ENCODE measurements at regions of chr7 and their contacts with region 1.

Region 1: DNA sequence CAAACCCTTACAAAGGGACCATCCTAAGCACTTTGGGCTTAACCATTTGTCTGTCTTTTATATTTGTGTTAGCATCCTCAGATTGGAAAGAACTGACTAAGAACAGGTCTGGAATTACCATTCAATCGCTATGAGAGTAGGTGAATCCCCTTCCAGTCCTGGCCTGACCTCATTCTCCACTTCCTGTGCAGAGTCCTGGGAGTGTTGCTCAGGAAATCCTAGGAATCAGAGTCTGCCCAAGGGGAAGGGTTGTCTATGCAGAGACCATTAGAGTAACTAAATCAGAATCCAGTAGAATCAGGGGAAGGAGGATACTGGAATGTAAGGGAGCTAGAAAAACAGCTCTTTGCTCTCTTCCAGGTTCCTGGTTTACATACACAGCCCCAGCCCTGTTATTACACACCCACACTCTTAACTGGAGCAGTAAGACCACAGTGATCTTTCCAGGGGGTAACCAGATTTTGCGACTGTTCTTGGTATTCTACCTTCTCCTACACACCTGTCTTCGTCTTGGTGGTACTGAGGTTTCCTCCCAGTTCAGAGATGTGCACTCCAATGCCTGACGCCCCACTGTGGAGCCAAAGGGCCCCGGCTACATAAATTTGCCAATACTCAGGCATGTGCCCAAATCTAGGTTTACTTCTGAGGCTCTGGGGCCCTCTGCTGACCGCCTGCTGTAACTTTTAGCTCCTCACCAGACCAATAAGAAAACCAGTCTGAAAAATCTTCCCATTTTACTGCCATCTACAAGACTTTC is 103.7 kb downstream of the RNF216 start:
- DNase-seq: peak; percentile 84
- H3K4me3 ChIP-seq: peak overlapping the region in 1 of 3 experiments; percentile 17
- H3K27ac ChIP-seq: peak overlapping the region; percentile 75
- H3K4me1 ChIP-seq: peaks cover 17% of the 10 kb centered on the region
- H3K27me3 ChIP-seq: no peaks in the 10 kb centered on the region
- CTCF ChIP-seq: peak; percentile 77 to 81
- POLR2A ChIP-seq: no peak

Region 2: GRCh38 chr7:5243261-5243660 is 434.5 kb before region 1 on chr7:
- CTCF ChIA-PET with region 1: interaction called, 12 read pairs
- POLR2A ChIA-PET with region 1: interaction called, 3 read pairs
- dilution Hi-C with region 1: no loop called
- intact Hi-C with region 1: loop called (anchors 5 kb)
- DNase-seq: no peak
- H3K4me3 ChIP-seq: no peak overlapping the region
- H3K27ac ChIP-seq: no peak overlapping the region
- H3K4me1 ChIP-seq: peaks cover 2% of the 10 kb centered on the region
- H3K27me3 ChIP-seq: no peaks in the 10 kb centered on the region
- CTCF ChIP-seq: no peak
- POLR2A ChIP-seq: no peak

Region 3: DNA sequence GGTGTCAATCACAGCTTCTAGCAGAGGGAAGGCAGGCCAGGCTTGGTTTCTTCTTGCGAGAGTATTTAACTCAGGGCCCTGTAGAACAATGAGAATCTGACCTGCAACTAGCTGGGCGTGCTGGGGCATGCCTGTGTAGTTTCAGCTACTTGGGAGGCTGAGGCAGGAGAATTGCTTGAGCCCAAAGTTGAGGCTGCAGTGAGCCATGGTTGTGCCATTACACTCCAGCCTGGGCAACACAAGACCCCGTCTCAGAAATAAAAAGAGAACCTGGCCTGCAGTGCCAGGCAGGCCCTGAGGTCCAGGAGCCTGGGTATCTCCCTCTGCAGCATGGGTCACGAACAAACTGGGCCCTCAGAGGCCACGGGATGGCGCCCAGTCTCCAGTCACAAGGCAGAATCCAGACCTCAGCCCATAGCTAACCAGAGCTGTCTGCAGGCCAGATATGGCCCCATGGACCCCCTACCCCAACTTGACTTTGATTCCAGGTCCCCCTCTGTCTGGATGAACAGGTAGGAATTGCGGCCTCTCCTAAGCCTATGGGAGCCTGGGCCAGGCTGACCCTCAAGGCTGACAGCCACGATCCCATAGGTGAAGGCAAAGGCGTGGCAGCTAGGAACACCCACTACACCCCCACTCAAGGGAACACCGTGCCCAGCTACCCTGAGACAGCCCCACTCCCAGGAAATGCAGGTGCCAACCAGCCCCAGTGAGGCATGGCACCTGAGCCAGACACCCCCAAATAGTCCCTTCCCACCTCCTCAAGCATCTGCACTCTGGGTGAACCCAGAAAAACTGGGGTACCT is 151.4 kb before region 1 on chr7:
- CTCF ChIA-PET with region 1: interaction called, 31 read pairs
- POLR2A ChIA-PET with region 1: interaction called, 4 read pairs
- dilution Hi-C with region 1: no loop called
- intact Hi-C with region 1: no loop called
- DNase-seq: peak; percentile 34
- H3K4me3 ChIP-seq: no peak overlapping the region
- H3K27ac ChIP-seq: no peak overlapping the region
- H3K4me1 ChIP-seq: peaks cover 3% of the 10 kb centered on the region
- H3K27me3 ChIP-seq: no peaks in the 10 kb centered on the region
- CTCF ChIP-seq: no peak
- POLR2A ChIP-seq: peak; percentile 69

Region 4: DNA sequence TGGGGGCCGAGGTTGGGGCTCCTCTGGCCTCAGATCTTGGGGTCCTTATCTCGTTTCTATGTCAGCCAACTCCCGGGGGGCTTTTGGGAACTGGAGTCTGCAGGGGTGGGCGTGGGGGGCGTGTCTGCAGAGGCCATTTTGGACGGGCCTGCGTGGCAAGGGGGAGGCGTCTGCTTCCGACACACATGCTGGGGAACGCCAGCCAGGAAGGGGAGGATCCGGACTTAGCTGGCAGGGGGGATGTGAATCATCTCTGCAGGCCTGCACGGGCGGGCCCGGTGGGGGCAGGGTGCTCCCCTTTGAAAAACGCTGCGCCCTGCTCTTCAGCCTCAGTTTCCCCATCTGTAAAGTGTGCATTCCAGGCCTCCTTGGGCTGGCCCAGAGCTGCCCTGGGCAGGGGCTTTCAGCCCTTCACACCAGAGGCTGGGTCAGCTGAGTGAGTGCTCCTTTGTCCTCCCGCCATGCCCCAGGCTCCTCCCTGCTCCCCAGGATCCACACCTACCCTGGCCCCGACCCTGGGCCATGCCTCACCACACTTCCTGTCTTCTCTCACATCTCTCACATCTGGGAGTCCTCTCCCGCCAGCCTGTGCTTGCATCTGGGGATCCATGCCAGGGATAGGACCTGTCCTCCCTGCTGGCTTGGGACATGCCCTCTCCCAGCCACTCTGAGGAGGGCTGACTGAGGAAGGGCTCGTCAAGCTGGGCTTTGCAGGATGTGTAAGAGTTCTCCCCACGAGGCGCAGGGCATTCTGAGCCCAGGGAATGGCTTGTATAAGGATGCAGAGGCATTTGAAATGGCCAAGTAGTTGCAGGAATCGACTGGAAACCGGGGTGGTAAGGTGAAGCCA is 81.4 kb before region 1 on chr7:
- CTCF ChIA-PET with region 1: interaction called, 14 read pairs
- POLR2A ChIA-PET with region 1: interaction called, 3 read pairs
- dilution Hi-C with region 1: no loop called
- intact Hi-C with region 1: no loop called
- DNase-seq: peak; percentile 88
- H3K4me3 ChIP-seq: peak overlapping the region; percentile 20 to 93 (median 85)
- H3K27ac ChIP-seq: peak overlapping the region; percentile 72
- H3K4me1 ChIP-seq: peaks cover 41% of the 10 kb centered on the region
- H3K27me3 ChIP-seq: no peaks in the 10 kb centered on the region
- CTCF ChIP-seq: no peak
- POLR2A ChIP-seq: peak; percentile 82

Region 5: GRCh38 chr7:5694912-5695726 is 17.4 kb after region 1 on chr7:
- CTCF ChIA-PET with region 1: interaction called, 37 read pairs
- POLR2A ChIA-PET with region 1: interaction called, 3 read pairs
- dilution Hi-C with region 1: no loop called
- intact Hi-C with region 1: no loop called
- DNase-seq: no peak
- H3K4me3 ChIP-seq: no peak overlapping the region
- H3K27ac ChIP-seq: no peak overlapping the region
- H3K4me1 ChIP-seq: peaks cover 34% of the 10 kb centered on the region
- H3K27me3 ChIP-seq: no peaks in the 10 kb centered on the region
- CTCF ChIP-seq: no peak
- POLR2A ChIP-seq: no peak

Region 6: GRCh38 chr7:6008668-6009611 is 331.2 kb after region 1 on chr7 and contains the starts of genes AIMP2 and PMS2:
- CTCF ChIA-PET with region 1: no interaction called
- POLR2A ChIA-PET with region 1: no interaction called
- dilution Hi-C with region 1: no loop called
- intact Hi-C with region 1: no loop called
- DNase-seq: peak; percentile 99
- H3K4me3 ChIP-seq: peak within 1 kb of the TSS; percentile 27 to 83 (median 71)
- H3K27ac ChIP-seq: peak within 1 kb of the TSS; percentile 56
- H3K4me1 ChIP-seq: peaks cover 5% of the 10 kb centered on the region
- H3K27me3 ChIP-seq: no peaks in the 10 kb centered on the region
- CTCF ChIP-seq: peak in 1 of 2 donors; percentile 26
- POLR2A ChIP-seq: peak; percentile 93
- total RNA-seq, gene AIMP2: 44.6 and 45.6 TPM in 2 replicates
- total RNA-seq, gene PMS2: 14.5 and 15.9 TPM in 2 replicates